Activated CD8-positive, alpha-beta T cell treated with anti-CD3 and anti-CD28 coated beads, Interleukin-2, amount 10 ng/mL, durations not matched to agents 7 days and 5 days (primary cell): ENCODE measurements at regions of chr6 and their contacts with region 1.

Region 1: DNA sequence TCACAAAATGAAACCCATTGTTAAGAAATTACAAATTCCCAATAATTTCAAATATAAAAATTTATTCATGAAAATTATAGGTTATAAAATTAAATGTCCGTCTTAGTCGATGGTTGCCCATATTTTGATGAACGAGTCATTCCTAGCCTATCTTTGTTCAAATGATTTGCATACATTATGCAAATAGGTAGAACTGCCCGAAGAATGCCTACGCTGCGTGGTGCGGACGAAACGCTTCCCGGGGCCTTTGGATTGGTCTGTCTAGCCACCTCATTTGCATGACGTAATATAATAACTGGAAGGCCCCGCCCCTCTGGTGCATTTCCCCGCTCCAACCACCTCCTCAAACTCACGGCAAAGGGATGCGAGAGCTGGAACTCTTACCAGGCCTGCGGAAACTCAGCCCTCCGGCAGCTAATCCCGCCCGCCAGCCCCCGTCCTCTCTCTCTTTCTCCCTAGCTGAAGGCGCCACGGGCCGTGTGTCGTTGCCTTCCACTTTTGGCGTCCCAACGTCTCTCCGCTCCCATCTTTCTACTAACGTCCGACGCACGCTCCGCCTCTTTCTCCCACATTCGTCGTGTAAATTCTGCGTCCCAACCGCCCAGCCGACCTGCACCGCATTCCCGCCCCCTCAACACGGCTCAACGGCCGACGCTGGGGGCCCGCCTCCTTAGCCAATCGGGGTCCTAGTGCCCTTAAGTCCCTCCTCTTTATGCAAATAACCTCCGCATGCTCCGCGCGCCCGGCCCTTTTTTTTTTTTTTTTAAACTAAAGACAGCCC is 520 bp upstream of the PRRC2A start:
- DNase-seq: peak; percentile 99
- ATAC-seq: peak; percentile 89
- H3K4me3 Mint-ChIP-seq: peak overlapping the region; percentile 93
- H3K27ac Mint-ChIP-seq: peak overlapping the region; percentile 95
- H3K4me1 Mint-ChIP-seq: peaks cover 53% of the 10 kb centered on the region
- H3K27me3 Mint-ChIP-seq: no peaks in the 10 kb centered on the region

Region 2: DNA sequence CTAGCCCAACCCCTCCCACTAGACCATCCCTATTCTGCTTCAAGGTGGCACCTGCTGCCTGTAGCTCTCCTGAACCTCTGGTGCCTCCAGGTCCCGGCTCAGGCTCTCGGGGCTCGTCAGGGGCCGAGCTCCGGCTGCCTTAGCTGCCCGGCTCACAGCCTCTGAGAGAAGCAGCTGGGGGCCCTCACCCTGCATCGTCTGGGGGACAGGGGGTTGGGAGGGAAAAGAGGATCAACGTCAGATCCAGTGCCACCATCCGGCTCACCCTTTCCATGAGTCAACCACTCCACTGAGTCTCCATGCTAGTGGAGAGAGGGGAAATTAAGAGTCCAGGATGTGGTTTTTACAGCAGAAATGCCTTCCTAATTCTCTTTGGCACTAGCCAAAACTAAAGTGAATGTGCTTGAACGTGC is 19.5 kb after region 1 on chr6:
- CTCF ChIA-PET with region 1: interaction called, 7 read pairs
- POLR2A ChIA-PET with region 1: interaction called, 10 read pairs
- DNase-seq: no peak
- ATAC-seq: no peak
- H3K4me3 Mint-ChIP-seq: no peak overlapping the region
- H3K27ac Mint-ChIP-seq: no peak overlapping the region
- H3K4me1 Mint-ChIP-seq: peaks cover 8% of the 10 kb centered on the region
- H3K27me3 Mint-ChIP-seq: no peaks in the 10 kb centered on the region

Region 3: DNA sequence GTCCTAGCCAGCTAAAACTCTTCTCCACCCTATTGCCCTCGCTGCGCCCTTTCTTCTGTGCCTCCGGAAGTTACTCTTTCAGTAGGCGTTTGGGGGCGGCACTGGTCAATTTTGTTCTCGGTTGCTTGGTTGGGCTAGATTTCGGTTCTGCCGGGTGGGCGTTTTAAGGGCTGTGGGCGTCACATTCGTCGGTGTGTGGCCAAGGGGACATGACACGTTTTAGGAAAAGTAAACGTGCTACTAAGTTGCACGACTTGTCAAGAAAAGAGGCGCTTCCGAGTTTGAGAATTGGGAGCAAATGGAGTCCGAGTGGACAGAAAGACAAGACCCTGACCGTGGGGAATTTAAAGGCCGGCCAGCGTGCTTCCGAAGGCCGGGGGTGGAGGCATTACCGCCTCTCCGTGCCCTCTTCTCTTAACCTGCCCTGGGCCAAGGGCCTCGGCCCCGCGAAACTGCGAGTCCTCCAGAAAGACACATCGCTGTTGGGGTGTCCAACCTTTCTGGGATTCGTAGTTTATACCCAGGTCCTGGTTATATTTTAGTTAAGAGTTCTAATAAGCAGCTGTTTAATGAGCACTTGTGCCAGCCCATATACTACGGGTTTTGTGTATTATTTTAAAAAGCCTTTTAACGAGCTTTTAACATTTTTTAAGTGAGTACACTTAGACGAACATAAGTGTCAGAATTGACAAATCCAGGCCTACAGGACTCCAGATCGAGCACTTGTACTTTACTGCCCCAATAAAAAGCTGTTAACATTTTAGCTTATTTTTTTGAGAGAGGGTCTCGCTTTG is 33.1 kb after region 1 on chr6:
- CTCF ChIA-PET with region 1: no interaction called
- POLR2A ChIA-PET with region 1: interaction called, 29 read pairs
- DNase-seq: peak; percentile 93
- ATAC-seq: peak; percentile 72
- H3K4me3 Mint-ChIP-seq: peak overlapping the region; percentile 96
- H3K27ac Mint-ChIP-seq: peak overlapping the region; percentile 98
- H3K4me1 Mint-ChIP-seq: peaks cover 66% of the 10 kb centered on the region
- H3K27me3 Mint-ChIP-seq: no peaks in the 10 kb centered on the region